ENCODE measurements at regions of chr7 and their contacts with region 1.

Region 1: GRCh38 chr7:149662591-149663095 is 110.7 kb downstream of the ZNF467 start:
- DNase-seq: peak; percentile 79
- ATAC-seq: peak; percentile 92
- H3K4me3 Mint-ChIP-seq: no peak overlapping the region
- H3K27ac Mint-ChIP-seq: no peak overlapping the region
- H3K4me1 Mint-ChIP-seq: no peaks in the 10 kb centered on the region
- H3K27me3 Mint-ChIP-seq: peaks cover 41% of the 10 kb centered on the region

Region 2: DNA sequence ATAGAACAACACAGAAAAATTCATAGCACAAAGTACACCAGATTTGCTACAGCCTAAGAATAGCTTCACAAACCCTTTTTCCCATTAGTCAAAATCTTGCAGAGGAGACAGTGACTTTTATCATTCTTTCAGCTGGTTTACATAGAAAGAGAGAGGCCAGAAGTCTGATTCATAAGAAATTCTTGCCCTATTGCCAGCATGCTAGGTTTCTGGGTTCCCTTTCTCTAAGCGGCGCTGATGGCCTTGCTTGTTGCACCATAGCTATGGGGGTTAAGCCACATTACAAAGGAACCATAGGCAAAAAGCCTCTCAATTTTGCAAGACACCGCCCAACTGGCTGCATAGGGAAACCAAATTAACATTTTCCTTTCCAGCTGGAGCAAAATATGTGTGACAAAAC is 23.4 kb after region 1 on chr7:
- CTCF ChIA-PET with region 1: no interaction called
- POLR2A ChIA-PET with region 1: no interaction called
- DNase-seq: peak; percentile 15
- ATAC-seq: no peak
- H3K4me3 Mint-ChIP-seq: no peak overlapping the region
- H3K27ac Mint-ChIP-seq: no peak overlapping the region
- H3K4me1 Mint-ChIP-seq: no peaks in the 10 kb centered on the region
- H3K27me3 Mint-ChIP-seq: peaks cover 24% of the 10 kb centered on the region

Region 3: DNA sequence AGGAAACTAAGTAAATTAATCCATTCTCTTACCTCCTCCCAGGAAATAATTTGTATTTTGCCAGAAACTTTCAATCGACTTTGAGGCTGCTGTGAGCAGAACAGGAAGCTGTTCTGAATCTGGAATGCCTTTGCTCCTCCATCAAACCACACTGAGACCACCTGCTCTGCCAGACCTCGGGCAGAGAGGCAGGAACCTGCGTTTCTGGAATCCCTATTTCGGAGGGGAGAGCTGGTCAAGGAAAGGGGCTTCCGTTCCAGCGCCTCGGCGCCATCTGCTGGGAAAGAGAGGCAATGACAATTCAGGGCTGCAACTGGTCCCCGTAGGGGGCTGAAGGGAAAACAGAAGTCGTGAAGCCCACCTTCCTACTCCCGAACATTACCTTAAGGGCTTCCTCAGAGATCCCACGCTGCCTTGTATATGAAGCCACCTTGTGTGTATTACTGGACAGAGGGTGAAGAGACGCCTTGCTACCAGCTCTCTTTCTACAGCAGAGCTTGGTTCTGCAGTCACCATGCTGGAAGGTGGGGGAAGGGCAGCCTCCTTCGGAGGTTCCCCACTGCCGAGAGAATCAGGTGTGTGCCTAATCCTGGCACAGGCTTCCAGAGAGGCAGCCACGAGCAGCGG is 79.5 kb after region 1 on chr7:
- CTCF ChIA-PET with region 1: interaction called, 74 read pairs
- POLR2A ChIA-PET with region 1: no interaction called
- DNase-seq: peak; percentile 69
- ATAC-seq: peak; percentile 83
- H3K4me3 Mint-ChIP-seq: peak overlapping the region; percentile 27
- H3K27ac Mint-ChIP-seq: no peak overlapping the region
- H3K4me1 Mint-ChIP-seq: peaks cover 10% of the 10 kb centered on the region
- H3K27me3 Mint-ChIP-seq: peaks cover 42% of the 10 kb centered on the region

Region 4: GRCh38 chr7:149753401-149754233 is 91.0 kb after region 1 on chr7:
- CTCF ChIA-PET with region 1: interaction called, 10 read pairs
- POLR2A ChIA-PET with region 1: no interaction called
- DNase-seq: no peak
- ATAC-seq: no peak
- H3K4me3 Mint-ChIP-seq: no peak overlapping the region
- H3K27ac Mint-ChIP-seq: no peak overlapping the region
- H3K4me1 Mint-ChIP-seq: no peaks in the 10 kb centered on the region
- H3K27me3 Mint-ChIP-seq: no peaks in the 10 kb centered on the region

Region 5: GRCh38 chr7:149846436-149847046 is 183.9 kb after region 1 on chr7:
- CTCF ChIA-PET with region 1: no interaction called
- POLR2A ChIA-PET with region 1: no interaction called
- DNase-seq: no peak
- ATAC-seq: no peak
- H3K4me3 Mint-ChIP-seq: no peak overlapping the region
- H3K27ac Mint-ChIP-seq: no peak overlapping the region
- H3K4me1 Mint-ChIP-seq: peaks cover 22% of the 10 kb centered on the region
- H3K27me3 Mint-ChIP-seq: peaks cover 2% of the 10 kb centered on the region

Measured in activated CD8-positive, alpha-beta T cell treated with anti-CD3 and anti-CD28 coated beads, Interleukin-2, amount 10 ng/mL, durations not matched to agents 7 days and 5 days (primary cell).